Left cardiac atrium (tissue), 4 donors: ENCODE measurements at regions of chr14 and their contacts with region 1.

Region 1: DNA sequence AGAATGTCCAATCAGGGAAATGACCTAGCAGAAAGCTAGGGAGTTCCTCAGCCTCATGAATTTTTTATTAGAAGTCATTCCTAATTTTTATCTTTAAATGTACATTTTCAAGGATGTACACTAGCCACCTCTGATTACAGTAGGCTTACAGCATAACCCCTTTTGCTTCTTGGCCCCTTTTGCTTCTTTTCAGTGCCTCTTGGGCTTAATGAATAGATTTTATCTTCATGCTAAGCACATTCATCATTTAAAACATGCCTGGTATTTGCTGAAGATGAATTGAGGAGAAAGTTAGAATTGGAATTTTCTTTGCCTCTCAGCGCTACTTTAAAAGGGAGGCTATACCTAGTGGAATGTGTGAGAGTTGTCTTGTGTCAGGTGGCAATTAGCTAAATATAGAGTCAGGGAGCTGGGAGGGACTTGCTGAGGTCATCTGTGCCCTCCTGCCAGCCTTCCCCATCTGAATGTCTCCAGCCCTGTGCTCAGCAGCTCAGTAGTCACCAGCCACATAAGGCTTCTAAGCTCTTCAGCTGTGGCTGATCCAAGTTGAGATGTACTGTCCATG is 132.1 kb downstream of the SAMD4A start:
- DNase-seq: no peak
- ATAC-seq: peak; percentile 85 to 88

Region 2: GRCh38 chr14:54516734-54517133 is 182.3 kb before region 1 on chr14:
- intact Hi-C with region 1: no loop called
- DNase-seq: no peak
- ATAC-seq: no peak

Region 3: GRCh38 chr14:54773171-54773975 is 74.3 kb after region 1 on chr14:
- intact Hi-C with region 1: loop called in 1 of 2 experiments (anchors 5 kb)
- DNase-seq: peak; percentile 92
- ATAC-seq: peak; percentile 84 to 91